ENCODE measurements at regions of chr10 and their contacts with region 1.

Region 1: GRCh38 chr10:133329491-133330202 is 7.0 kb downstream of the CALY start:
- DNase-seq: peak; percentile 91
- ATAC-seq: peak; percentile 86
- H3K4me3 Mint-ChIP-seq: no peak overlapping the region
- H3K27ac Mint-ChIP-seq: no peak overlapping the region
- H3K4me1 Mint-ChIP-seq: peaks cover 15% of the 10 kb centered on the region
- H3K27me3 Mint-ChIP-seq: peaks cover 48% of the 10 kb centered on the region
- CTCF ChIP-seq: peak; percentile 98

Region 2: DNA sequence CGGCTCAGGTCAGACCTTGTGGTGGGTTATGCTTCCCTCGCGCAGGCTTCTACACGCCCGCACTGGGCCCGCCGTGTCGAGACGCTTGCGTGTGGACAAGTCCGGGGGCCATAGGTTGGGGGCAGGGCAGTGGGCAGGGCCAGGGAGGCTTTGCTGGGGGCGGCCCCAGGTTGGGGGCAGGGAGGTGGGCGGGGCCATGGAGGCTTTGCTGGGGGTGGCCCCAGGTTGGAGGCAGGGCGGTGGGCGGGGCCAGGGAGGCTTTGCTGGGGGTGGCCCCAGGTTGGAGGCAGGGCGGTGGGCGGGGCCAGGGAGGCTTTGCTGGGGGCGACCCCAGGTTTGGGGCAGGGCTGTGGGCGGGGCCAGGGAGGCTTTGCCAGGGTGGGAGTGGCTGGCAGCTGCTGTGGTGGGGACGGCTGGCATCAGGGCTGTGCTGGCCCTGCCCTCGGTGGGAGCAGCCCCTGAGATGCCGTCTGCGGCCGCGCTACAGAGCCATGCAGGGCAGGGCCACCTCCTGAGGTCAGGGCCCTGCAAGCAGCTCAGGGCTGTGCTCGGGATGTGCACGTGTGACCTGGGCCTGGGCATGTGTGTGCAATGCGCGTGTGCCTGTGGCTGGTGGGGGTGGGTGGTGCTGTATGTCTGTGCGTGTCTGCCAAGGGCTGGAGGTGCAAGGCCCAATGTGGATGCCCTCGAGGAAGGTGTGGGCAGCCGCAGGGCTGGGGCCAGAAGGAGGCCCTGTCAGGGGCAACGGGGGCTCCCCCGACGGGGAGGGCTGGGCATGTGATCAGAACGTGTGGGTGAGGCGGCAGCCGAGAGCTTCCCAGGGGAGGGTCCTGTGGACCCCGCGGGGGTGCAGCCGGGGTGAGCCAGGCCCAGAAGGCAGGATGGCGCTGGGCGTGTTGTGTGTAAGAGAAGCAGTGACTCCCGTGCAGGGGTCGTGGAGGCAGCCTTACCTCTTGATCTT is 471.2 kb before region 1 on chr10:
- CTCF ChIA-PET with region 1: no interaction called
- POLR2A ChIA-PET with region 1: no interaction called
- intact Hi-C with region 1: no loop called
- DNase-seq: no peak
- ATAC-seq: no peak
- H3K4me3 Mint-ChIP-seq: no peak overlapping the region
- H3K27ac Mint-ChIP-seq: no peak overlapping the region
- H3K4me1 Mint-ChIP-seq: peaks cover 3% of the 10 kb centered on the region
- H3K27me3 Mint-ChIP-seq: peaks cover 2% of the 10 kb centered on the region
- CTCF ChIP-seq: no peak

Region 3: DNA sequence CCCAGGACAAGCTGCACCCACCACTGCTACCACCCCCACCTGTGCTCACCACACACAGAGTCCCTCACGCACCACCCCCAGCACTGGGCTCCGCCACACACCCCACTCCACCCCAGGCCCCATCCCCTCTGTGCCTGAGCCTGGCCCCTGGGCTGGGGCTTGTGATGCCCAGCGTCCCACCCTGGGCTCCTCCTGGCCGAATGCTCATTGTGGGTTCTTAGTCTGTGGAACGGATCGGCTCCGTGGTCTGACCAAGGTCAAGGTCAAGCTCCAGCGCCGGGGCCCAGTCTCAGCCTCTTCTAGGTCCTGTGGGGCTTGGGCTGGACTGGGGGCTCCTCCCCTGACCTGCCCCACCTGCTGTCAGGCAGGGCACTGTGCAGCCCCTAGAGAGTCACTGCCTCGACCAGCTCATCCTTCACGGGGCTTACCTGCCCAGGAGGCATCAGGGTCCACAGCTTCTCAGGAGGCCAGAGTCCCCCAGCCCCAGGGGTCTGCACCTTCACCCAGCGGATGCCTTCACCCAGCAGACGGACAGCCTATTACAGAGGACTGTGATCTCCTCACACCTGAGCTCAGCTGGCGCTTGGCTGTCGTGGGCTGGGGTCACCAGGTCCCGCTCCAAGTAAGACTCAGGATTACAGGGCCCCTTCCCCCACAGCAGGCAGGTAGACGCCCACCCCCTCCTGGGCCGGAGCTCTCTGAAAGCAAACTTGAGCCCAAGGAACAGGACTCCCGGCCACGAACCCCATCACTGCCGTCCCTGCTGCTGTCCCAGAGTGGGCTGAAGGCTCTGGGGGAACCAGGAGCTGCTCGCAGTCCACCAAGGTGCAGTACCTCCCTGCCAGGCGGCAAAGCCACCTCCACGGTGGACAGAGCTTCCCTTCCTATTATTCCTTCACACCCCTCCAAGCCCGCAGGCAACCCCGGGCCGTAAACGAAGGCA is 114.9 kb before region 1 on chr10:
- CTCF ChIA-PET with region 1: no interaction called
- POLR2A ChIA-PET with region 1: no interaction called
- intact Hi-C with region 1: no loop called
- DNase-seq: no peak
- ATAC-seq: no peak
- H3K4me3 Mint-ChIP-seq: no peak overlapping the region
- H3K27ac Mint-ChIP-seq: no peak overlapping the region
- H3K4me1 Mint-ChIP-seq: no peaks in the 10 kb centered on the region
- H3K27me3 Mint-ChIP-seq: peaks cover 3% of the 10 kb centered on the region
- CTCF ChIP-seq: no peak

Region 4: DNA sequence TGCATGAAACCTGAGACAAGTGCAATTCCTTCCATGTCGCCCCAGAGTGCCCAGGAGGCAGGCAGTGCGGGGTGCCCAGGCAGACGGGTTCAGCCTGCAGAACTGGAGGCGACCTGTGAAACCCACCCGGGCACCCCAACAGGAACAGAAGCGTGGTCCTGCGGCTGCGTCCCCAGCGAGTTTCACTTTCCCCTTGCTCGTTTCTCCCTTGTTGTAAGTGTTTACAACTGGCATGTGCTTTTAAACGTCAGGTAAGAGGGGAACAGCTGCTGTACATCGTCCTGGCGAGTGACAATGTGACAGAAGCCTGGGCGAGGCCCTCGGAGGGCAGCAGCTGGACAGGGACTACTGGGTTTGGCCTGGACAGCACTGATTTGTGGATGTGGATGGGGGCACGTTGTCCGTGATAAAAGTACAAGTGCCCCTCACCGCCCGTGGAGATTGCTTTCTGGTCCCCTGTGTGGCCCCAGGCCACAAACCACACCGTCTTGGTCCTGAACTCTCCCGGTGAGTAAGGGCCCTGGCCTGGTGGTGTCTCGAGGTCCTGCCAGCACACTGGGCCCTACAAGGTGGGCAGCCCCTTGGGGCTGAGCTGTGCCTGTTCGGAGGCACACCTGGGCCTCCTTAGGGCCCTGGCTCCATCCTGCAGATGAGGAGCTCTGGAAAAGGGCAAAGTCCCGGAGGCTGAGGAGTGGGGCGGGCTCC is 88.0 kb before region 1 on chr10:
- CTCF ChIA-PET with region 1: no interaction called
- POLR2A ChIA-PET with region 1: no interaction called
- intact Hi-C with region 1: no loop called
- DNase-seq: peak; percentile 39
- ATAC-seq: no peak
- H3K4me3 Mint-ChIP-seq: peak overlapping the region; percentile 42
- H3K27ac Mint-ChIP-seq: no peak overlapping the region
- H3K4me1 Mint-ChIP-seq: peaks cover 16% of the 10 kb centered on the region
- H3K27me3 Mint-ChIP-seq: peaks cover 39% of the 10 kb centered on the region
- CTCF ChIP-seq: no peak

Region 5: DNA sequence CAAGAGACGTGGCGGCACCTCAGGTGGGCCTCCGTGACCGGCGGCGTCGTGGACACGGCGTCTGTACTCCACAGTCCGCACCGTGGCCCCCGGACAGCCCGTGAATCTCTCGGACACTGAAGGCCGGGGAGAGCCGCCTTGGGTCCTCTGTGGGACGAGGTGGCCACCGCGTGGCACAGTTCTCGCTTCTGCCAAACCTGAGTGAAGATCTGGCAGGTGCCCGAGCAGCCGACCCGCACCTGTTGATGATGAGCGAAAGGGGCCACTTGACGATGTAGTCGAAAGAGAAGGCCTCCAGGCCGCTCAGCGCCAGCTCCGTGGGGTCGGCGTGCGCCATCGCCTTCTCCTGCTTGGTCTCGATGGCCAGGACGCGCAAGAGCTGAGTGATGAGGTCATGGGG is 44.4 kb before region 1 on chr10:
- CTCF ChIA-PET with region 1: no interaction called
- POLR2A ChIA-PET with region 1: no interaction called
- intact Hi-C with region 1: no loop called
- DNase-seq: no peak
- ATAC-seq: no peak
- H3K4me3 Mint-ChIP-seq: no peak overlapping the region
- H3K27ac Mint-ChIP-seq: no peak overlapping the region
- H3K4me1 Mint-ChIP-seq: no peaks in the 10 kb centered on the region
- H3K27me3 Mint-ChIP-seq: no peaks in the 10 kb centered on the region
- CTCF ChIP-seq: no peak

Region 6: GRCh38 chr10:133318494-133319127 is 11.0 kb before region 1 on chr10:
- CTCF ChIA-PET with region 1: interaction called, 26 read pairs
- POLR2A ChIA-PET with region 1: interaction called, 4 read pairs
- intact Hi-C with region 1: no loop called
- DNase-seq: peak; percentile 79
- ATAC-seq: peak; percentile 94
- H3K4me3 Mint-ChIP-seq: peak overlapping the region; percentile 65
- H3K27ac Mint-ChIP-seq: no peak overlapping the region
- H3K4me1 Mint-ChIP-seq: peaks cover 8% of the 10 kb centered on the region
- H3K27me3 Mint-ChIP-seq: peaks cover 10% of the 10 kb centered on the region
- CTCF ChIP-seq: peak; percentile 81

Region 7: GRCh38 chr10:133357285-133358151 is 27.9 kb after region 1 on chr10 and contains the start of gene FUOM:
- CTCF ChIA-PET with region 1: interaction called, 25 read pairs
- POLR2A ChIA-PET with region 1: interaction called, 6 read pairs
- intact Hi-C with region 1: no loop called
- DNase-seq: peak; percentile 84
- ATAC-seq: peak; percentile 91
- H3K4me3 Mint-ChIP-seq: peak within 1 kb of the TSS; percentile 82
- H3K27ac Mint-ChIP-seq: peak within 1 kb of the TSS; percentile 82
- H3K4me1 Mint-ChIP-seq: peaks cover 14% of the 10 kb centered on the region
- H3K27me3 Mint-ChIP-seq: no peaks in the 10 kb centered on the region
- CTCF ChIP-seq: no peak
- total RNA-seq, gene FUOM: 32.2 to 33.7 TPM

Region 8: DNA sequence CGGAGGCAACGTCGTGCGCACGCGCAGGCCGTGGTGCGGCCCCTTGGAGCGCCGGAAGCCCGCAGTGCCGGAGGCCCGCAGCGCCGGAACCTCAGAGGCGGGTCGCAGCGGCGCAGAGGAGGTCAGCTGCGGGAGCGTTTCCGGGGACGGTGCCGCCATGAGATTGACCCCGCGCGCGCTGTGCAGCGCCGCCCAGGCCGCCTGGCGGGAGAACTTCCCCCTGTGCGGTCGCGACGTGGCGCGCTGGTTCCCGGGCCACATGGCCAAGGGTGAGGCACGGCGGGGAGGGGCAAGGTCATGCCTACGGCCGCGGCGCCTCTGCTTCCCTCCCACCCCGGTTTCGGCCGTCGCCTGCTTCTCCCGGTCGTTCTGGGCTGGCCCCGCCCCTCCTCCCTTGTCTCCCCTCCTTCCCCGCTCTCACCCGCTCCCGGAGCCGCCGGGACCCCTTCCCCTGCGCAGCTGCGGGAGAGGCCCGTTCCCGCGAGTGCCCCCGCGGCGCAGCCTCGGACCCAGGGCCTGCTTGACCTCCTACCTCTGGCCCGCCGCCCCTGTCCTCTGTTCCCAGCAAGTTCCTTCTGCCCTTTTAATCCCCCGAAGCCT is 64.5 kb after region 1 on chr10 and contains the start of gene MTG1:
- CTCF ChIA-PET with region 1: interaction called, 37 read pairs
- POLR2A ChIA-PET with region 1: no interaction called
- intact Hi-C with region 1: loop called (anchors 5 kb)
- DNase-seq: peak; percentile 92
- ATAC-seq: peak; percentile 74
- H3K4me3 Mint-ChIP-seq: peak within 1 kb of the TSS; percentile 88
- H3K27ac Mint-ChIP-seq: peak within 1 kb of the TSS; percentile 92
- H3K4me1 Mint-ChIP-seq: peaks cover 50% of the 10 kb centered on the region
- H3K27me3 Mint-ChIP-seq: no peaks in the 10 kb centered on the region
- CTCF ChIP-seq: no peak
- total RNA-seq, gene MTG1: 45.7 to 48.9 TPM

Region 9: GRCh38 chr10:133520155-133520738 is 190.6 kb after region 1 on chr10:
- CTCF ChIA-PET with region 1: interaction called, 14 read pairs
- POLR2A ChIA-PET with region 1: no interaction called
- intact Hi-C with region 1: no loop called
- DNase-seq: peak; percentile 94
- ATAC-seq: peak; percentile 100
- H3K4me3 Mint-ChIP-seq: peak overlapping the region; percentile 63
- H3K27ac Mint-ChIP-seq: peak overlapping the region; percentile 39
- H3K4me1 Mint-ChIP-seq: peaks cover 9% of the 10 kb centered on the region
- H3K27me3 Mint-ChIP-seq: peaks cover 6% of the 10 kb centered on the region
- CTCF ChIP-seq: peak; percentile 95

Measured in activated CD8-positive, alpha-beta T cell treated with anti-CD3 and anti-CD28 coated beads for 36 hours (primary cell).